HEK293 (cell line): ENCODE measurements at regions of chr14 and their contacts with region 1.

Region 1: DNA sequence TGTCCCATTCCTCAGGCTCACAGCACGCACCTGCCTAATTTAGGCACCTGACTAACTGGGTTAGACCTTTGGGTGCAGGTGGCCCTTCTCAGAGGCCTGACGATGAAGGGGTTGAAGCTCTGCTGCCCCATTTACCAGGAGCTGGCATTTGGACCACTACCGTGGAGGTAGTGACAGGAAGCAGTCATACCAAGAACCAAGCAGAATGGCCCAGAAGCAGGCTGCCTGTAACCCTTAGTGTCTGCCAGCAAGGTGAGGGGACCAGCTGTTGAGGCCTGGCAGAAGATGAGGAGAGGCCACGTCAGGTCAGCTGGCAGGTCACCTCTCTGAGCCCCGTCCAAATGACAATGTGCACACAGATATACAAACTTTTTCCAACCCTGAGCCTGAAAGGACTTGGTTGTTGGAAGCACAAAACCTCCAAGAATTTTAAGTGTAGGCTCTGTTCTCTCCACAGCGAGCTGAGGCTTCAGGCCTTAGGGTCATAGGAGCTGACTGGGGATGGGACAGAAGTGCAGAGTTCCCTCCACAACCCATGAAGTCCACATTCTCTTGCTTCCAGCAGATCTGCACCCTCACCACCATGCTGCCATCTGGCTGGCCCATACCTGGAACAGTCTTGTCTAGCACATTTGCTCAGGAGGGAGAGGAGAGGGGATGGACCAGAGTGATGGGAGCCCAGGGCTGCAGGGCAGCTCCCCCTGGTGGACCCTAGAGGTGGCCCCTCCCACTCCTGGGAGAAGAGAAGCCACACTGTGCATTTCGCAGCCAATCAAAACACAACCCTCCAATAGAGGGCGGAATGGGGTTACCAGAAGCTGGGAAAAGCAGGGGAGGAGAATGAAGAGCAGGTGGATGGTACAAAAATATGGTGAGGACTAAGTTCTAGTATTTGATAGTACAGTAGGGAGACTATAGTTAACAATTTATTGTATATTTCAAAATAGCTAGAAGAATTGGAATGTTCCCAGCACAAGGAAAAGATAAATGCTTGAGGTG is 23.3 kb downstream of the VASH1 start:
- H3K4me3 ChIP-seq: no peak overlapping the region
- H3K27ac ChIP-seq: no peak overlapping the region
- H3K4me1 ChIP-seq: no peaks in the 10 kb centered on the region
- CTCF ChIP-seq: peak; percentile 89

Region 2: DNA sequence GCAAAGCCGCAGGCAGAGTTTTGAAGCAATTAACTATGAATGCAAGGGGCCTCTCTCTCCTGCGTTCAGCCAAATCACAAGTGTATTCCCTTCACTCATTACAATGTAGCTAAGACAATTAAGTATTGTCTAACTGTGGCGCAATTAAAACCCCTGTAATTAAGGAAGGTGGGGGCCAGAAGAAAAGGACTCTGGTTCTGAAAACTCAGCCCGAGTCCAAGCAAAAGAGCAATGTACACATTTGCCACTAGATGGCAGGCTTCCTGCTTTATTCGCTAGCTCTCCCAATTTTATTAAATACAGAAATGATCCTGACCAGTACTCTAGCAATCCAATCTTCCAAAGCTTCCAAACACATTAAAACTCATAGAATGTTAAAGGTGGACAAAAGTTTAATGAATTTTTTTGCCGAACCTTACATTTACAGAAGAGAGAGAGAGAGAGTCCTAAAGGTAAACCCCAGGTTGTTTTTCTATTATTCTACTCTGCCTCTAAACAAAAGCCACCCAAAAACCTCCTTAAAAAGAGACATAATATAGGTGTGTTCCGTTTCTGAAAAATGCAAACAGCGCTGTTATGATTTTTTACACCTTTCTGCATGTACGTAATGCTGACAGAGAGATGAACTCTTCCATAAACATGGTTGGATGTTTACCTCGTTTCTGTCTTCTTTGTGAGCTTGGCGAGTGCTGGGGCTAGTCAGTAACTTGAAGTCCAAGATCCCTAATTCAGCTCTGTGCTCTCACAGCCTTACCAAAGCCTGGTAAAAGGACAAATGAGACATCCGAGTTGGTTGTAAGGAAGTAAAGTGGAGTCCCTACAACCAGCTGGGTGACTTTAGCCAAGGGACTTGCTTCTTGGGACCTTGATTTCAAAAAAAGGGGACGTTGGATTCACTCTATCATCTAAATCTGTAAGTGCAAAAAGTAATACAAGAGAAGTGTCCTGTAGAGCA is 74.2 kb before region 1 on chr14:
- CTCF ChIA-PET with region 1: interaction called, 77 read pairs
- POLR2A ChIA-PET with region 1: no interaction called
- H3K4me3 ChIP-seq: no peak overlapping the region
- H3K27ac ChIP-seq: no peak overlapping the region
- H3K4me1 ChIP-seq: no peaks in the 10 kb centered on the region
- CTCF ChIP-seq: peak; percentile 29; the same call in 1 of the 2 replicates

Region 3: GRCh38 chr14:76720382-76720813 is 64.2 kb before region 1 on chr14:
- CTCF ChIA-PET with region 1: interaction called, 20 read pairs
- POLR2A ChIA-PET with region 1: no interaction called
- H3K4me3 ChIP-seq: no peak overlapping the region
- H3K27ac ChIP-seq: no peak overlapping the region
- H3K4me1 ChIP-seq: no peaks in the 10 kb centered on the region
- CTCF ChIP-seq: no peak

Region 4: DNA sequence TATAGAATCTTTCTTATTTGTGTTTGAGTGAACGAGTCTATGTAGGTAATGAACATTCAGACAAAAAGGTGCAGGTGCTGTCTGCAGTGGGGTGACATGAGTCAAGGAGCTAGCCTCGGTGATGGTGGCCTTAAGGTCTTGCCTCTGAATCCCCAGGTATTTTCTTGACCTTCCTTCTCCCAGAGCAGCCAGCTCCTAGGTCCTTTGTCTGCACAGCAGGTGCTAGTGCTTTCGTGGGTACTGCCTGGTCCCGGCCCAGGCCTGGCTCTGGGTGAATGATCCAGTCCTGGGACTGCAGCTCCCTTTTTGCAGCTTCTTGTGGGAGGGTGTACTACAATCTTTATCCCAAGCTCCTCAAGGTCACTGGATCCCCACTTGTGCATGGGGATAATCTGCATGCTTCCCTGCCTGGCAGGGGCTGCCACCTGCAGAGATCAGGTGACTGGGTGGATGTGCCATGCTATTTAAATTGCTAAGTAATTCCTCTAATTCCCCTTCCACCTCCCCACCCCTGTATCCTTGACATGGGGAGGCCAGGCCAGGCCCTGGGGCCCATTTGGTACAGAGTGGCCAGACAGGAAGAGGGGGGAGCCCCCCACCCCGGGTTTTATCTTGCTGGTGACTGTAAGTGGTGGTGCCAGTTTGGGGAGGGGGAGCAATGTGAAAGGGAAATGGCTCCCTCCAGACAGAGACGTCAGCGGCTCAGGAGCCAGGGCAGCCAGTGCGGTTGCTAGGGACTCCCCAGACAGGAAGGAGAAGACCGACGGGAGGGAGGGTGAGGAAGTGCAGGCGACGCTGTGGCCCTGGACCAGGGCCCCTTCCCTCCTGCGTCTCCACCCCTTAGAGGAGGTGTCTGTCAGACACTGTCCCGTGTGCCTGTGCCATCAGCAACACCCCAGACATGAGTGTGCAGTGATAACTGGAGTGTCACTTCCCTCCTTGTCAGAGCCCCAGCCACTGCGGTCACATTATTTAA is 16.6 kb before region 1 on chr14:
- CTCF ChIA-PET with region 1: interaction called, 13 read pairs
- POLR2A ChIA-PET with region 1: interaction called, 3 read pairs
- H3K4me3 ChIP-seq: no peak overlapping the region
- H3K27ac ChIP-seq: no peak overlapping the region
- H3K4me1 ChIP-seq: no peaks in the 10 kb centered on the region
- CTCF ChIP-seq: no peak

Region 5: DNA sequence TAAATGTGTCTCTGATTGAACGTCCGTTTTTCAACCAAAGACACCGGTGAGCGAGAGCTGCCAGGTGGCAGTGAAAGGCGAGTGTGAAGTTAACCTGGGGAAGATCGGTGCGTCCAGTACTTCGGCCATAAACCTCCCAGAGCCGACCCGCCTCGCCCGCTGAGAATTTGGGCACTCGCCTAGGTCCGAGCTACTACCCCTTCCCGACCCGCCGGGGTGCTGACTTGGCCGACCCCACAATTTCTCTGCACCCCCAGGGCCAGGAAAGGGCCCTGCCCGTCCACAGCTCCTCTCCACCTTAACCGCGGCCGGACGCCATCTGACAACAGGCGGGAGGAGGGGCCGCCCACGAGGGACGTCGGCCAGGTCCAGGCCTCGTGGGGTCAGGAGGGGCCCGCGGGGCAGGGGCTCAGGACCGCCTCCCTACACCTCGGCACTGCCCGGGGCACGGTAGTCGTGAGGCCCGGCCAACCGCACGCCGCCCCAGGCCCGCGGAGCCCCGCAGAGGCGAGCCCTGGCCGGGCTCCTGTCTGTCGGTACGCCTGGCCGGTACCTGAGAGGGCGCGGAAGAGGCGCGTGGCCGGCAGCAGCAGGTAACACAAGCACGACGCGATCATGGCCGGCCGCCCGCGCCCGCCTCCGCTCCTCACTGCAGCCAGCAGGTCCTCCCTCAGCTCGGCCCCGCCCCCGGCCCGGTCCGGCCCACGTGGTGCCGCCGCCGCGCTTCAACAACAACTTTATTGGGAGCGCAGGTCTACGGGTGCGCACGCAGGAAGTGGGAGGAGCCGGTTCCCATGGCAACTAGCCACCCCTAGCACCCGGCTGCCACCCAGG is 27.9 kb after region 1 on chr14 and contains the start of gene ANGEL1:
- CTCF ChIA-PET with region 1: interaction called, 22 read pairs
- POLR2A ChIA-PET with region 1: interaction called, 3 read pairs
- H3K4me3 ChIP-seq: peak within 1 kb of the TSS; percentile 72
- H3K27ac ChIP-seq: peak within 1 kb of the TSS; percentile 79; the same call in 1 of the 2 replicates
- H3K4me1 ChIP-seq: peaks cover 14% of the 10 kb centered on the region; the same call in 1 of the 2 replicates
- CTCF ChIP-seq: no peak

Region 6: DNA sequence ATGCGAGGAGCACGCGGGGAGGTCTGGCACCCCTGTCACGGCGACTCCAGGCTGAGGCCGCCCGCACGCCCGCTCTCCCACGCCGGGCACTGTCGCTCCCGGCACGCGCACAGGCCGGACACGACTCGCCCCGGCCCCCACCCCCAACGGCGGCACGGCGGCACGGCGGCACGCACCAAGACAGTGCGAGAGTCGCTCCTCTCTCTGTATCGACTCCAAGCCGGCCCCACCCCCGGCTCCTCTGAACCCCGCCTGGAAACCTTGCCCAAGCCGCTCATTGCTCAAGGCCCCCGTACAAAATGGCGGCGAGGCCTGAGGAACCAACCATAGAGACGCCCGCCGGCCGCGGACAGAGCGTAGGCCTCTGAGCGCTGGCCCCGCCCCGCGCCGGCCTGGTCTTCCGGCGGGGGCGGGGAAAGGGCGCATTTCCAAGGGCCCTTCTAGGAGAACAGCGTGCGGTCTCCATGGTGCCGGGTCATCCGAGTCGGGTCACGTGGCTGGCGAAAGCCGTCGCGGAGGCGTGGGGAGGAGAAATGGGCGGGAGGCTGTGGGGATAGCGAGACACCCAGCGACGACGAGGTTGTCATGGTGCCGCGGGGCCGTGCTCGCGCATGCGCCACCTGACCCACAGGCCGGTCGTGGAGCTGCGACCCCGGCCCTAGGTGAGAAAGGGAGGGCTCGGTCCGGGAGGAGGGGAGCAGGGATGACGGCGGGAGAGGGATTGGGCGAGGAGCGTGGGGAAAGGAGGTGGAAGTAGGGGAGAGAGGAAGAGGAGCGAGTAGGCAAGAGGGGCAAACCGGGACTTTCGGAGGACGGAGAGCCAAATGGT is 313.3 kb after region 1 on chr14 and contains the start of gene CIPC:
- CTCF ChIA-PET with region 1: interaction called, 10 read pairs
- POLR2A ChIA-PET with region 1: no interaction called
- H3K4me3 ChIP-seq: peak within 1 kb of the TSS; percentile 88
- H3K27ac ChIP-seq: peak within 1 kb of the TSS; percentile 87
- H3K4me1 ChIP-seq: peaks cover 18% of the 10 kb centered on the region
- CTCF ChIP-seq: peak; percentile 41; the same call in 1 of the 2 replicates